Left cardiac atrium (tissue), 4 donors: ENCODE measurements at regions of chr3 and their contacts with region 1.

Region 1: GRCh38 chr3:142735462-142735861 is 11.6 kb downstream of the TRPC1 start:
- DNase-seq: no peak
- ATAC-seq: peak; percentile 50 to 54

Region 2: DNA sequence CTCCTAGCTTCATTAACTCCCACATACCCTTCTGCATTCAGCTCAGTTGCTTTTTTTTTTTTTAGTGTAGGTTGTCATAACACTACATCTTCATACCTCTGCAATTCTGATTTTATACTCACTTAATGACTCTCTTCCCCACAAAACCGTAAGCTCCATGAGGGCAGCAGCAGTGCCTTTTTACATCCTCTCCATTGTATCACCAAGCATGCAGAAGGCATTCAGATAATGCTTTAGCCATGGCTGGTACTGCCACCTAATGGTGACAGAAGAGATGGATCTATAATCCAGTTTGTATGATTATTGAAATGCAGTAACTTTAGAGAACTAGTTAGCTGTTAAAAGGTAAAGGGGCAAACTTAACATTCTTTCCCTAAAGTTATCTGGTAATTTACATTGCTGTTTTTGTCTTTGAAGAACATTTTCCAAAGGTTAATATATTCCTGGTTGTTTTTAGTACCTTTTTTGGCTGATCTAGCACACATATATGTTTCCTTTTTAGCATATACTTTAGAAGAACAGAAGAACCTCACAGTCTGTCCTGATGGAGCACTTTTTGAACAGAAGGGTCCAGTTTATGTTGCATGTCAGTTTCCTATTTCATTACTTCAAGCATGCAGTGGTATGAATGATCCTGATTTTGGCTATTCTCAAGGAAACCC is 822.2 kb before region 1 on chr3:
- intact Hi-C with region 1: no loop called
- DNase-seq: no peak
- ATAC-seq: peak; percentile 50 to 69

Region 3: GRCh38 chr3:143001369-143002082 is 266.1 kb after region 1 on chr3 and contains the start of gene U2SURP:
- intact Hi-C with region 1: loop called in 1 of 2 experiments (anchors 10 kb)
- DNase-seq: peak; percentile 98
- ATAC-seq: peak; percentile 96 to 97
- total RNA-seq, gene U2SURP: 46.8 to 48.9 TPM